Activated T-helper 1 cell treated with anti-CD3 and anti-CD28 coated beads, Interleukin-12 subunit alpha, Interleukin-12 subunit beta, Interleukin-2, Interleukin-4 antibody, amounts not matched to agents 30 ng/mL and 10 ng/mL and 1 ng/mL, durations not matched to agents 14 hours and 24 hours and 36 hours (primary cell): ENCODE measurements at regions of chr13 and their contacts with region 1.

Region 1: GRCh38 chr13:29850224-29850898 is at the start of gene UBL3:
- DNase-seq: peak; percentile 90
- H3K4me3 Mint-ChIP-seq: peak within 1 kb of the TSS; percentile 97
- H3K27ac Mint-ChIP-seq: peak within 1 kb of the TSS; percentile 98
- H3K4me1 Mint-ChIP-seq: peaks cover 50% of the 10 kb centered on the region
- H3K27me3 Mint-ChIP-seq: no peaks in the 10 kb centered on the region
- total RNA-seq, gene UBL3: 10.9 and 12.8 TPM in 2 replicates

Region 2: DNA sequence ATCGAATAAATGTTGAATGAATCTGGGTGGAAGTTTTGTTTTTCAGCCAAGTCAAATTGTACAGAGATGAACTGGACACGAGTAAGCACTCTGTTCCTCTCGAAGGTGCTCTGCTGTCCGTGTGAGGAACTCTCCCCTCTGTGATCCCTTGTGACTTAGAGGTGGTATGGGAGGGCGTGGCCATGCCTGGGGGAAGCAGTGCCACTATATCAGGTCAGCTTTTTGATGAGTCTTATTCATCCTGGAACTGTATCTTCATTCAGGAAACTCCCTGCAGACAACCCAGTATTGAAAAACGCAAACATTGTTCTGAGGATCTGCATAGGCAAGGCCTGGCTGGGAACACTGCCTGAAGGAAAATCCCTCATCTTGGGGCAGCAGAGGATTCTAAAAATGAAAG is 1309.7 kb before region 1 on chr13:
- intact Hi-C with region 1: no loop called
- DNase-seq: no peak
- H3K4me3 Mint-ChIP-seq: no peak overlapping the region
- H3K27ac Mint-ChIP-seq: peak overlapping the region; percentile 84
- H3K4me1 Mint-ChIP-seq: peaks cover 32% of the 10 kb centered on the region
- H3K27me3 Mint-ChIP-seq: no peaks in the 10 kb centered on the region

Region 3: GRCh38 chr13:29508130-29508875 is 342.1 kb before region 1 on chr13:
- intact Hi-C with region 1: loop called (anchors 10 kb)
- DNase-seq: peak; percentile 59
- H3K4me3 Mint-ChIP-seq: no peak overlapping the region
- H3K27ac Mint-ChIP-seq: no peak overlapping the region
- H3K4me1 Mint-ChIP-seq: no peaks in the 10 kb centered on the region
- H3K27me3 Mint-ChIP-seq: no peaks in the 10 kb centered on the region

Region 4: GRCh38 chr13:29771247-29771646 is 79.1 kb before region 1 on chr13:
- intact Hi-C with region 1: loop called (anchors 2 kb)
- DNase-seq: no peak
- H3K4me3 Mint-ChIP-seq: no peak overlapping the region
- H3K27ac Mint-ChIP-seq: no peak overlapping the region
- H3K4me1 Mint-ChIP-seq: no peaks in the 10 kb centered on the region
- H3K27me3 Mint-ChIP-seq: no peaks in the 10 kb centered on the region

Region 5: DNA sequence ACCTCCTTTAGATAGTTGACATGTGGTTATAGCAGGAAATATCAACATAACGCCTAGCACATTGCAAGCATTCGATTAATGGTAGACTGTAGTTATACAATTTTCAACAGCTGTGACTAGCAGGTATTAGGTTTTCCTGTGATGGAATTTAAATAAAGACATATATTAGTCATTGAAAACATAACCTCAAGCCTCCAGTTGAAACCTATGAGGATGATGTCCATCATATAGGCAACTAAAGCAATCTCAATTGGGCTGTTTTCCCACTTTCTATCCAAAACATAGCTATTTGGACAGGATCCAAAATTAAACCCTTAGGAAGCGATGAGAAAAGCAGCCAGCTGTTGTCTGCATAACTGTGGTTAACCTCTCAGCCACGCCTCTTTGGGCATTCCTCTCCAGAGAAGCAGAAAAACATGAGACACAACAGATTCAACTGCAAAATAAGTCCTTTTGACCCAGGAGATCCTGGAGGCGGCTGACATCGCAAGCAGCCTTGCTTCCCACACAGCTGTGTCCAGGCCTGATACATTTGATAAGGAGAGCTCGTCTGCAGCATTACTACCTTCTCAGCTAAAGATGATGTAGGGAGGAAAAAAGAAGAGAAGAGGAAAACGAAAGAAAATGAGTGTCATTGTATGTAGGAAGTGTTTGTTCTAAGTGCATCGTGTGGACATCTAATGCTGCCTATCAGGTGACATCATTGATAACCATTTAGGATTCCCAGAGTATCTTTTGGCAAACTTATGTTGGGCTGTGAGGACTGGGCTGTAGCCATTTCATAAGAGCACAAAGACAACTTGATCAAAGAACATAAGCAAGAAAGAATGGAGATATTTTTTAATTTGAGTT is 52.0 kb after region 1 on chr13:
- intact Hi-C with region 1: loop called (anchors 1 kb)
- DNase-seq: peak; percentile 43
- H3K4me3 Mint-ChIP-seq: peak overlapping the region; percentile 79
- H3K27ac Mint-ChIP-seq: peak overlapping the region; percentile 86
- H3K4me1 Mint-ChIP-seq: peaks cover 31% of the 10 kb centered on the region
- H3K27me3 Mint-ChIP-seq: peaks cover 23% of the 10 kb centered on the region

Region 6: GRCh38 chr13:30158774-30159445 is 308.5 kb after region 1 on chr13:
- intact Hi-C with region 1: loop called (anchors 1 kb)
- DNase-seq: no peak
- H3K4me3 Mint-ChIP-seq: peak overlapping the region; percentile 23
- H3K27ac Mint-ChIP-seq: peak overlapping the region; percentile 78
- H3K4me1 Mint-ChIP-seq: peaks cover 43% of the 10 kb centered on the region
- H3K27me3 Mint-ChIP-seq: peaks cover under 1% of the 10 kb centered on the region

Region 7: DNA sequence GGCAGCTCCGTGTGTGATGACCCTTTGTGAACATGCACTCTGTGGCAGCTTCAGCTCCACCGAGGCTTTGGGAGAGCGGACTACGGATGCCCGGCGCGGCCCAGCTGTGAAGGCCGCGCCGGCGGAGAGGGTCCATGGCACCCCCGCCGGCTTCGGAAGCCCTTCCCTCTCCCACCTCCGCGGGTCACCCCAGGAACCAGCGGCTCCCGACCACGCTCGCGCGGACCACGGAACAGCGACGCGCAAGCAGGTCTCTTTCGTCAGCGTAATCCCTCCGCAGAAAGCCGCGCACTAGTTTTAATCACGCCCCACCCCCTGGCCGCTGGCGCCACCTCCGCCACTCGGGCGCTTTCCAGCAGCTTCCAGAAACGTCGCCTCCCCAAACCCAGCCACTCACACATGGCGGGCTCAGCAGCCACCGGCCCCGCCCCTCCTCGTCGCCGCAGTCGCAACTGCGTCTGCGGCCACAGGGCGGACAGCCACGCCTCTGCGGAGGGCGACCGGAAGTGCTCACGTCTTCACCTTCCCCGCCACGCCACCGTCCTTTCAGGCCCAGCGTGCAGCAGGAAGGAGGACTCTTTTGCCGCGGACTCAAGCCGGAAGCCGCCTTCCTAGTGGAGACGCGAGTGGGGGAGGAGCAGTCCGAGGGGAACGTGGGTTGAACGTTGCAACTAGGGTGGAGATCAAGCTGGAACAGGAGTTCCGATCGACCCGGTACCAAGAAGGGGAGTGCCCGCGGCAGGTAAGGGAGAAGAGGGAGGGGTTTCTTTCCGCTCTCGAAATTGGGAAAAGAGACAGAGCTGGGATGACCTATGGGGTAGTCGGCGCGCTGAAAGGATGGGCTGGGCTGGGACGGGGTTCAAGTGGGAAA is 767.2 kb after region 1 on chr13 and contains the start of gene USPL1:
- intact Hi-C with region 1: loop called (anchors 1 kb)
- DNase-seq: peak; percentile 99
- H3K4me3 Mint-ChIP-seq: no peak within 1 kb of the TSS
- H3K27ac Mint-ChIP-seq: no peak within 1 kb of the TSS
- H3K4me1 Mint-ChIP-seq: peaks cover 12% of the 10 kb centered on the region
- H3K27me3 Mint-ChIP-seq: no peaks in the 10 kb centered on the region
- total RNA-seq, gene USPL1: 17.2 and 17.5 TPM in 2 replicates